Activated CD8-positive, alpha-beta T cell treated with anti-CD3 and anti-CD28 coated beads, Interleukin-2, amount 10 ng/mL, durations not matched to agents 7 days and 5 days (primary cell): ENCODE measurements at regions of chr18 and their contacts with region 1.

Region 1: GRCh38 chr18:46660955-46661749 is 4.1 kb upstream of the LOXHD1 start:
- DNase-seq: no peak
- ATAC-seq: no peak
- H3K4me3 Mint-ChIP-seq: no peak overlapping the region
- H3K27ac Mint-ChIP-seq: no peak overlapping the region
- H3K4me1 Mint-ChIP-seq: peaks cover 3% of the 10 kb centered on the region
- H3K27me3 Mint-ChIP-seq: peaks cover 14% of the 10 kb centered on the region

Region 2: GRCh38 chr18:46148810-46149209 is 512.3 kb before region 1 on chr18:
- CTCF ChIA-PET with region 1: interaction called, 44 read pairs
- POLR2A ChIA-PET with region 1: no interaction called
- DNase-seq: peak; percentile 75
- ATAC-seq: peak; percentile 53
- H3K4me3 Mint-ChIP-seq: no peak overlapping the region
- H3K27ac Mint-ChIP-seq: peak overlapping the region; percentile 65
- H3K4me1 Mint-ChIP-seq: peaks cover 49% of the 10 kb centered on the region
- H3K27me3 Mint-ChIP-seq: no peaks in the 10 kb centered on the region

Region 3: GRCh38 chr18:46273829-46274228 is 387.3 kb before region 1 on chr18:
- CTCF ChIA-PET with region 1: interaction called, 115 read pairs
- POLR2A ChIA-PET with region 1: no interaction called
- DNase-seq: no peak
- ATAC-seq: no peak
- H3K4me3 Mint-ChIP-seq: no peak overlapping the region
- H3K27ac Mint-ChIP-seq: no peak overlapping the region
- H3K4me1 Mint-ChIP-seq: peaks cover 37% of the 10 kb centered on the region
- H3K27me3 Mint-ChIP-seq: no peaks in the 10 kb centered on the region

Region 4: GRCh38 chr18:46555724-46556123 is 105.4 kb before region 1 on chr18:
- CTCF ChIA-PET with region 1: interaction called, 18 read pairs
- POLR2A ChIA-PET with region 1: no interaction called
- DNase-seq: peak; percentile 22
- ATAC-seq: no peak
- H3K4me3 Mint-ChIP-seq: no peak overlapping the region
- H3K27ac Mint-ChIP-seq: no peak overlapping the region
- H3K4me1 Mint-ChIP-seq: no peaks in the 10 kb centered on the region
- H3K27me3 Mint-ChIP-seq: peaks cover 5% of the 10 kb centered on the region

Region 5: DNA sequence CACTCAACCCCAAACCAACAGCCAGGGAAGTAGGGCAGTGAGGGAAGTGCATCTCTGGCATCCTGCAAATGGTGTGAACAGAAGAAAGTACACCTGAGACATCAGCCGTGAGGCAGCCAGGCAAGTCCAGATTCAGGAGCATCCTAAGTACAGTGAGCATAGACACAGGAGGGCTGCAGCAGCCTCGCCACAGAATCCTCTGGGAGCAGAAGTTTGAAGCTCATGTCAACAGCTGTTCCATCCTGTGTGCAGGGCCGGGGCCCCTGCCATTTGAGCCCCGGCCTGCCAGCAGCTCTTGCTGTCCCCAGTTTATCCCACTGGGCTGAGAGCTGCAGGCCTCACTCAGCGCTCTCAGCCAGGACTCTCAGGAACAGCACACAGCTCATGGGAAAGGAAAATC is 18.6 kb before region 1 on chr18:
- CTCF ChIA-PET with region 1: interaction called, 16 read pairs
- POLR2A ChIA-PET with region 1: no interaction called
- DNase-seq: no peak
- ATAC-seq: no peak
- H3K4me3 Mint-ChIP-seq: no peak overlapping the region
- H3K27ac Mint-ChIP-seq: no peak overlapping the region
- H3K4me1 Mint-ChIP-seq: no peaks in the 10 kb centered on the region
- H3K27me3 Mint-ChIP-seq: peaks cover 14% of the 10 kb centered on the region

Region 6: DNA sequence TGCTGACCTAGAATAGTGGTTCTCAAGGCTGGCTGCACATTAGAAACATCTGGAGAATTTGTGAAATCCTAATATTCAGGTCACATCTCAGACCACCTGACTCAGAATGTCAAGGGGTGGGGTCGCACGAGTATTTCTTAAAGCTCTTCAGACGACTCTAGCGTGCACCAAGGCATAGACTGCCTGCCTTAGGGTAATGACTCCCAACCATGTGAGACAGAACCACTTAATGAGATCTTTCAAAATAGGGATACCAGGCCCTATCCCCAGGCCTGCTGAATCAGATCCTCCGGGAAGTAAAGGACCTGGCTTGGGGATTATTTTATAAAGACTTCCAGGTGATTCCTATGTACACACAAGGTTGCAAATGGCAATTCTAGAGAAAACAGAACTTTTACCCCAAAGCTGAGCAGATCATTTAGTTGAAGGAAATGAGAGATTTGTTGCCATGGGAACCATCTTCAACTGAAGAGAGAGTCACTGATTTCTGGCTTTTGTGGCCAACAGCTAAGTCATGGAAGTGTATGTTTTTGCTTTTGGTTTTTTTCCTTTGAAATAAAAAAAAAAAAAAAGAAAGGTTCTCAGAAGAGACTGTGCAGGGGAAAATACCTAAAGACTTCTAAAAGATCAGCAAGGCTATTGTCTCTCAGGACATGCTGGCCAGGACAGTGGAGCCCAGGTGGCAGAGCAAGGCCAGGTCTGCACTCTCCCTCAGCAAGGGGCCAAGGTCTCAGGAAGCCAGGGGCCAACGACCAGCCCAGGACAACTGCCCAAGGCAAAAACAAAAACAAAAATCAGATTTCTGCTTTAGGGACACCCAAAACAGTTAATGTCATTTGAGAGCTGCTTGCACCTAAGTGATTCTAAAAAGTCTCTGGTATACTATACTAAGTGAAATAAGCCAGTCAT is 11.2 kb after region 1 on chr18:
- CTCF ChIA-PET with region 1: interaction called, 15 read pairs
- POLR2A ChIA-PET with region 1: interaction called, 3 read pairs
- DNase-seq: no peak
- ATAC-seq: peak; percentile 55
- H3K4me3 Mint-ChIP-seq: no peak overlapping the region
- H3K27ac Mint-ChIP-seq: no peak overlapping the region
- H3K4me1 Mint-ChIP-seq: peaks cover 8% of the 10 kb centered on the region
- H3K27me3 Mint-ChIP-seq: peaks cover 24% of the 10 kb centered on the region